ENCODE measurements at regions of chr15 and their contacts with region 1.

Region 1: GRCh38 chr15:68175526-68175925 is 29.6 kb downstream of the CALML4 start:
- DNase-seq: no peak
- ATAC-seq: no peak
- H3K4me3 ChIP-seq: no peak overlapping the region
- H3K27ac ChIP-seq: no peak overlapping the region
- H3K4me1 ChIP-seq: no peaks in the 10 kb centered on the region
- H3K27me3 ChIP-seq: no peaks in the 10 kb centered on the region
- CTCF ChIP-seq: no peak
- EP300 ChIP-seq: no peak
- POLR2A ChIP-seq: no peak
- RAD21 ChIP-seq: no peak

Region 2: DNA sequence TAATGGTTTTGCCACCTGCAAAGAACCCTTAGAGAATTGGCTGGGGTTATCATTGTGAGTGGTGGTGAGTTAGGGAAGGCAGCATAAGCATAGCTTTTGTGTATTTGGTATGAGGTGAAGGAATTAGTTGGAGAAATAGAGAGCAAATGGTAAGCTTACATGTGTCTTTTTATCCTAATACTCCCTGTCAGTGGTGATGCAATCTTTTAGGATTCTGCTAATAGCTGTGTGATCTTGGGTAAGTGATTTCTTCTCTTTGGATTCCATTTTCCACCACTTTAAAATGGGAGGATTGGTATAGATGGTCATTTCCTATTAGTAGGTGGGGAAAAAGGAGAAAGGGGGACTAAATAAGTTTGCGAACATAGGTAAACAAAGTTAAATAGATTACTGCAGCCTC is 90.5 kb before region 1 on chr15:
- CTCF ChIA-PET with region 1: no interaction called
- POLR2A ChIA-PET with region 1: no interaction called
- RAD21 ChIA-PET with region 1: no interaction called
- SMC1A ChIA-PET with region 1: no interaction called
- in situ Hi-C with region 1: no loop called
- intact Hi-C with region 1: no loop called
- DNase-seq: no peak
- ATAC-seq: no peak
- H3K4me3 ChIP-seq: no peak overlapping the region
- H3K27ac ChIP-seq: no peak overlapping the region
- H3K4me1 ChIP-seq: peaks cover 15% of the 10 kb centered on the region
- H3K27me3 ChIP-seq: no peaks in the 10 kb centered on the region
- CTCF ChIP-seq: no peak
- EP300 ChIP-seq: no peak
- POLR2A ChIP-seq: no peak
- RAD21 ChIP-seq: no peak

Region 3: GRCh38 chr15:68163191-68163590 is 12.3 kb before region 1 on chr15:
- CTCF ChIA-PET with region 1: interaction called, 6 read pairs
- POLR2A ChIA-PET with region 1: no interaction called
- RAD21 ChIA-PET with region 1: interaction called, 3 read pairs
- SMC1A ChIA-PET with region 1: interaction called, 14 read pairs
- in situ Hi-C with region 1: no loop called
- intact Hi-C with region 1: no loop called
- DNase-seq: no peak
- ATAC-seq: no peak
- H3K4me3 ChIP-seq: no peak overlapping the region
- H3K27ac ChIP-seq: no peak overlapping the region
- H3K4me1 ChIP-seq: no peaks in the 10 kb centered on the region
- H3K27me3 ChIP-seq: no peaks in the 10 kb centered on the region
- CTCF ChIP-seq: no peak
- EP300 ChIP-seq: no peak
- POLR2A ChIP-seq: no peak
- RAD21 ChIP-seq: no peak